ENCODE measurements at regions of chrX and their contacts with region 1.

Region 1: GRCh38 chrX:74540605-74541249 is 73.7 kb downstream of the RLIM start:
- DNase-seq: no peak
- ATAC-seq: no peak
- H3K4me3 ChIP-seq: no peak overlapping the region
- H3K27ac ChIP-seq: no peak overlapping the region
- H3K4me1 ChIP-seq: no peaks in the 10 kb centered on the region
- H3K27me3 ChIP-seq: no peaks in the 10 kb centered on the region
- CTCF ChIP-seq: no peak
- POLR2A ChIP-seq: no peak

Region 2: DNA sequence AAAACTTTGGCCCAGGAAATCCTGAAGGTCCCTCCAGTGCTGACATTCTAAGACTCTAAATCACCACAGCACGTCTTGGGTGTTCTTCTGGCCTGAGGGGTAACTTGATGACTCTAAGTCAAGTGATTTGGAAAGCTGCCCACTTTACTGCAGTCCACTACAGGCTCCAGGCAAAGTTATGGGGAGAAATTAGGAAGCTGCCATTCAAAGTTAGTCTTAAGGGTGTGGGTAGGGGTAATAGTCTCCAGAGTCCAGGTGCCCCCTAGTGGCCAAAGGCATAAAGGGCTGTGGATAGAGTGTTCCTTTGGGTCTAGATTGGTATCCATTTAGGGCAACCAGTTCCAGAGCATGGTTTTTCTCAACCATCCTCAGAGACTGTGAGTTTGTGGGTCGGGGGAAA is 158.1 kb before region 1 on chrX:
- intact Hi-C with region 1: loop called (anchors 10 kb)
- DNase-seq: peak; percentile 52 to 78 (median 66)
- ATAC-seq: peak; percentile 65
- H3K4me3 ChIP-seq: no peak overlapping the region
- H3K27ac ChIP-seq: no peak overlapping the region
- H3K4me1 ChIP-seq: no peaks in the 10 kb centered on the region
- H3K27me3 ChIP-seq: no peaks in the 10 kb centered on the region
- CTCF ChIP-seq: peak; percentile 49 to 78 (median 56)
- POLR2A ChIP-seq: no peak